Activated naive CD4-positive, alpha-beta T cell treated with anti-CD3 and anti-CD28 coated beads for 36 hours (primary cell): ENCODE measurements at regions of chr18 and their contacts with region 1.

Region 1: GRCh38 chr18:12934454-12935071 is 13.2 kb upstream of the SEH1L start:
- DNase-seq: peak; percentile 89
- H3K4me3 Mint-ChIP-seq: no peak overlapping the region
- H3K27ac Mint-ChIP-seq: no peak overlapping the region
- H3K4me1 Mint-ChIP-seq: peaks cover 3% of the 10 kb centered on the region
- H3K27me3 Mint-ChIP-seq: no peaks in the 10 kb centered on the region

Region 2: DNA sequence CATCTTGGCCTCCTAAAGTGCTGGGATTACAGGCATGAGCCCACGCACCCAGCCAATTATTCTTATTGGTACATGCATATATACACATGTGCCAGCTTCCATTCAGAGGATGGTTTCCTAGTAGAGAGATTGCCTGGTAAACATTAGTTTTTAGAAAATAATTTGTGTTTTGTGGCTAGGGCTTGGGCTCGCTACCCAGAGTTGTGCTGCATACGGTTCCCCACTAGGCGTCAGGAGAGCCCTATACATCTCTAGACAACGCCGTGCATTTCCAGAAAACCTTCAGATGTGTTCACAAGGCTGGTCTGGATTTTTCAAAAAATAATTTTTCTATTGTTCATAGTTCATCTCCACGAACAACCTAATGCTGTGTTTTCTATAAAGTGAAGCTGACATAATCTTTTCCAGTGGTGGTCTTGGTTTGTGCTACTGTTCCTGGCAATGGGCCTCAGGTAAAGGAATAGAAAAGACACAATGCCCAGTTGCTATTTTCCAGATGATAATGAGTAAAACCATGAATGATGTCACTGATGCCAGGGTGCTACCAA is 542.9 kb before region 1 on chr18:
- CTCF ChIA-PET with region 1: interaction called, 10 read pairs
- intact Hi-C with region 1: loop called (anchors 5 kb)
- DNase-seq: peak; percentile 72
- H3K4me3 Mint-ChIP-seq: no peak overlapping the region
- H3K27ac Mint-ChIP-seq: no peak overlapping the region
- H3K4me1 Mint-ChIP-seq: no peaks in the 10 kb centered on the region
- H3K27me3 Mint-ChIP-seq: peaks cover 4% of the 10 kb centered on the region

Region 3: GRCh38 chr18:12737243-12737902 is 197.2 kb before region 1 on chr18:
- CTCF ChIA-PET with region 1: interaction called, 116 read pairs
- intact Hi-C with region 1: no loop called
- DNase-seq: no peak
- H3K4me3 Mint-ChIP-seq: no peak overlapping the region
- H3K27ac Mint-ChIP-seq: no peak overlapping the region
- H3K4me1 Mint-ChIP-seq: no peaks in the 10 kb centered on the region
- H3K27me3 Mint-ChIP-seq: no peaks in the 10 kb centered on the region

Region 4: DNA sequence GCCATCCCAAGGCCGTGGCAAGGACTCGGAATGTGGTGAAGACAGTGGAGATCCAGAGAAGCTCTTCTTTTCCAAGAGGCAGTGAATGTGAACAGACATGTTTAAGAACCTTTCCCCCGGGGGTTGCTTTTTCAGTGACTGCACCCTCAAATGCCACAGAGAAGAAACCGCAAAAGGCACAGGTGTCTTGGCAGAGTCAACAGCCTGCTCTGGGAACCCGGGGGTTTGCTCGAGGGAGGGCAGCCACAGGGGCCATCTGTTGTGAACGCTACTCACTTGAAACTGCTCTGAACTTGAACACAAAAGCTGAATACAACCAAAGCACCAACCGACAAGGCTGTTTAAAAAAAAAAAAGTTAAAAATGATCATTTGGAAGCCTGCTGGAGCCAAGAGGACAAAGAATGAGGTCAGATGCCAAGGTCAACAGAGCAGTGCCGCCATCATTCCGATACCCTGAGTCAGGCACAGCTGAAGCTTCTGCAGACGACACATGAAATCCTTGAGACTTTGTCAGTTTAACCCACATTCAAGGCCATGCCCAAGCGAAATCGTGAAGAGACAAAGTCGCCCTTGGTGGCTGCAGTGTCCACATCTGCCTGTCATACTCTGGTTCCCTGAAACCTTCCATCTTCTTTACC is 184.4 kb before region 1 on chr18:
- CTCF ChIA-PET with region 1: interaction called, 41 read pairs
- intact Hi-C with region 1: no loop called
- DNase-seq: peak; percentile 67
- H3K4me3 Mint-ChIP-seq: peak overlapping the region; percentile 41
- H3K27ac Mint-ChIP-seq: peak overlapping the region; percentile 41
- H3K4me1 Mint-ChIP-seq: peaks cover 11% of the 10 kb centered on the region
- H3K27me3 Mint-ChIP-seq: peaks cover 3% of the 10 kb centered on the region

Region 5: DNA sequence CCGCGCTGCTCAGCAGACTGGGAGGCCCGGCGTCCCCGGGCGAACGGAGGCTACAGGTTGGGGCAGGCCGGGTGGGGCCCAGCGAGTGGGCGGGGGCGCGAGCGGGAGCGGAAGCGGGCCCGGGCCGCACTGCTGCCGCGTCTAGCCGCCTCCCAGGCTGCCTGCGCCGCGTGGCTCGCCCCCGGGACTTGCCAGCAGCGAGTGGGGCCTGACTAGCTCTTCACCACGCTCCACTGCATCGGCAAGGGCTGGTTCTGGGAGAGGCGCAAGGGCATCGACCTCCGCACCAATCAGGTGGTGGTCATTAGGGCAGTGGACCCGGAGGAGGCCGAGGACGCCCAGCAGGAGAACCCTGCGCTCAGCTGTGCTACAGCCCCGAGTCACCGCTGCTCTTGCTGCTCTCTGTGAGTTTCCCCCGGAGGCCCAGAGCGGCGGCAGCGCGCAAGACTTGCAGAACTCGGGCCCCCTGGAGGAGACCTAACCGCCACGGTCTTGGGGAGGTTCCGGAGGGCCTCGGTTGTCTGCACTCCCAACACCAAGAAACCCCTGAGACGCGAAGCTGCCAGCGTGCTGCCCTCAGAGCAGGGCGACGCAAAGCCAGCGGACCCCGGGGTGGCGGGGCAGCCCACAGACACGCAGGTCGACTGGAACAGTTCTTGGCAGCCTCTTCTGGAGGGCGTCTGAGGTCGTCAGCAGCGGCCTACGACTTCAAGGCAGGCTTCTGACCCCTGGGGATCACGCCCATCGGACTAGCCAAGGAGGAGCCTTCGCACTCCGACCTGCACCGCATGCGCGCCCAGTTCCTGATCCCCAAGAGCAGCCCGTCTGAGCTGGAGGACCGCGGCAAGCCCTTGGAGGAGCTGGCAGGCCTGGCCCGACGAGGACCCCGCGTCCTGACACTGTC is 23.3 kb before region 1 on chr18:
- CTCF ChIA-PET with region 1: interaction called, 10 read pairs
- intact Hi-C with region 1: no loop called
- DNase-seq: peak; percentile 60
- H3K4me3 Mint-ChIP-seq: peak overlapping the region; percentile 49
- H3K27ac Mint-ChIP-seq: no peak overlapping the region
- H3K4me1 Mint-ChIP-seq: peaks cover 5% of the 10 kb centered on the region
- H3K27me3 Mint-ChIP-seq: no peaks in the 10 kb centered on the region